Mammary epithelial cell (primary cell): ENCODE measurements at regions of chr9 and their contacts with region 1.

Region 1: GRCh38 chr9:35711501-35712428 is 20.2 kb downstream of the TLN1 start:
- DNase-seq: no peak
- H3K4me3 ChIP-seq: no peak overlapping the region
- H3K27ac ChIP-seq: no peak overlapping the region
- H3K4me1 ChIP-seq: no peaks in the 10 kb centered on the region
- H3K27me3 ChIP-seq: no peaks in the 10 kb centered on the region
- CTCF ChIP-seq: no peak

Region 2: DNA sequence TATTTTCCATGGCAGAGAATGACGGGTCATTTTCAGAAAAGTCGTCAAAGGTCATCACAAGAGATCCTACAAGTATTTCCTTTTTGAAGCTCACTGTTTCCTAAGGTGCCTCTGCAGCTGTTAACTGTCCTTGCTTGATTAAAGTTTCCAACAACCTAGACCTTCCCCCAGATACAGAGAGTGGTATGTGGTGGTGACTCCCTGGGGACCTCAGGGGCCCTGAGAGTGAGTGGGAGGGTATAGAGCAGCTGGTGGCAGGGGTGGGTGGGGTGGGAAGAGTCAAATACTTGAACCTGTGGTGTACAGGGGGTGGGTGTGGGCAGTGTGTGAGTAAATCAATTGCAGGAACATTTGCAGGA is 92.0 kb before region 1 on chr9:
- CTCF ChIA-PET with region 1: no interaction called
- dilution Hi-C with region 1: loop called (anchors 5 kb)
- in situ Hi-C with region 1: no loop called
- intact Hi-C with region 1: no loop called
- DNase-seq: no peak
- H3K4me3 ChIP-seq: no peak overlapping the region
- H3K27ac ChIP-seq: no peak overlapping the region
- H3K4me1 ChIP-seq: no peaks in the 10 kb centered on the region
- H3K27me3 ChIP-seq: peaks cover 2% of the 10 kb centered on the region
- CTCF ChIP-seq: no peak

Region 3: GRCh38 chr9:35675732-35676392 is 35.9 kb before region 1 on chr9:
- CTCF ChIA-PET with region 1: no interaction called
- dilution Hi-C with region 1: loop called (anchors 5 kb)
- in situ Hi-C with region 1: no loop called
- intact Hi-C with region 1: no loop called
- DNase-seq: no peak
- H3K4me3 ChIP-seq: peak overlapping the region in 2 of 3 experiments; percentile 35 to 45
- H3K27ac ChIP-seq: no peak overlapping the region
- H3K4me1 ChIP-seq: peaks cover 23% of the 10 kb centered on the region
- H3K27me3 ChIP-seq: no peaks in the 10 kb centered on the region
- CTCF ChIP-seq: no peak

Region 4: GRCh38 chr9:35869621-35870216 is 158.0 kb after region 1 on chr9:
- CTCF ChIA-PET with region 1: no interaction called
- dilution Hi-C with region 1: loop called (anchors 5 kb)
- in situ Hi-C with region 1: no loop called
- intact Hi-C with region 1: no loop called
- DNase-seq: peak; percentile 59
- H3K4me3 ChIP-seq: no peak overlapping the region
- H3K27ac ChIP-seq: no peak overlapping the region
- H3K4me1 ChIP-seq: peaks cover 22% of the 10 kb centered on the region
- H3K27me3 ChIP-seq: no peaks in the 10 kb centered on the region
- CTCF ChIP-seq: peak in 1 of 2 donors; percentile 17